ENCODE measurements at regions of chr11 and their contacts with region 1.

Region 1: DNA sequence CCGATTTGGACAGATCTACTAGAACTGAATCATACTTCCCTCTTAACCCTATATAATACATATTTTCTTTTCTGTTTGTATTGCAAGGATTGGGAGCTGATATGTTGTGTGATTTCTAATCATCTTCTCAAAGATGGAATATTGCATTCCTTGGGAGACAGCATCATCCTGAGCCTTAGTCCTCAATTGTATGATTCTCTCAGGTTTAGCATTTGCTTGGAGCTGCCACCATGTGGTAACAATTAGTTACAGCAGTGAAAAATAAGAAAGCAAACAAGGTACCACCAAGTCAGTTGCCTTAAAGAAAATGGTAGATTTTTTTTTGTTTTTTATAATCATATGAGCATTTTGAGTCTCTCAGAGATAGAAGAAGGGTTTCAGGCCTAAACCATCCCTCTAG is 11.9 kb downstream of the SNX19 start:
- DNase-seq: peak; percentile 25
- H3K4me3 Mint-ChIP-seq: no peak overlapping the region
- H3K27ac Mint-ChIP-seq: no peak overlapping the region
- H3K4me1 Mint-ChIP-seq: peaks cover 13% of the 10 kb centered on the region
- H3K27me3 Mint-ChIP-seq: no peaks in the 10 kb centered on the region
- CTCF ChIP-seq: no peak

Region 2: GRCh38 chr11:130876100-130876499 is 28.3 kb before region 1 on chr11:
- CTCF ChIA-PET with region 1: no interaction called
- POLR2A ChIA-PET with region 1: no interaction called
- intact Hi-C with region 1: no loop called
- DNase-seq: no peak
- H3K4me3 Mint-ChIP-seq: no peak overlapping the region
- H3K27ac Mint-ChIP-seq: no peak overlapping the region
- H3K4me1 Mint-ChIP-seq: peaks cover 8% of the 10 kb centered on the region
- H3K27me3 Mint-ChIP-seq: no peaks in the 10 kb centered on the region
- CTCF ChIP-seq: no peak

Region 3: DNA sequence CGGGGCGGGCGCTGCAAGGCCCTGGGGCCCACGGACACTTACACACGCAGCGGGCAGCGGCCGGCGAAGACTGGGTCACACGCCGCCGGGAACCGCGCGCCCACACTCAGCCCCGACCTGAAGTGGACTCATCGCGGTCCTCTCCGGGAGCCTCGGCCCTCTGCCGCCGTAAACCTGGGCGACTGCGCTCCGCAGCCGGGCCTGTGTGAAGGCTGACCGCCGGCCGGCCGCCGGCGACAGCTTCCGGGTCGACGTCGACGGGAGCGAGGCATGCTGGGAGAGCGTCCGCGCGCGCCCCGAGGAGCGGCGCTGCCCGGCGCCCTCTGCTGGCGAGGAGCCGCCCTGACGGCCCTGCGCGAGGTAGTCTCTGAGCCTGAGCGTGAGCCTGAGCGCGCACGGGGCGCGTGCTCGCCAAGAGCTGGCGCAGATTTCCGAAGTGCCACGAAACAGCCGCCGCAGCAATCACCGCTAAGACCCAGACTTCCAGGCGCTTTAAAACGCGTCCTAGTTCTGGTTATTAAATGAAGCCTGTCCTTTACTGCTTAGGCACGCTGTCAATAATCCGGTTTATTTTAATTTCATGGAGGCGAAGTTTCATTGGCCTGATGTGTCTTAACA is 12.0 kb after region 1 on chr11 and contains the start of gene SNX19:
- CTCF ChIA-PET with region 1: interaction called, 26 read pairs
- POLR2A ChIA-PET with region 1: interaction called, 6 read pairs
- intact Hi-C with region 1: no loop called
- DNase-seq: peak; percentile 85
- H3K4me3 Mint-ChIP-seq: peak within 1 kb of the TSS; percentile 72
- H3K27ac Mint-ChIP-seq: peak within 1 kb of the TSS; percentile 69
- H3K4me1 Mint-ChIP-seq: peaks cover 12% of the 10 kb centered on the region
- H3K27me3 Mint-ChIP-seq: peaks cover 7% of the 10 kb centered on the region
- CTCF ChIP-seq: peak; percentile 85
- total RNA-seq, gene SNX19: 53.5 and 60.5 TPM in 2 replicates